Left cardiac atrium (tissue), 4 donors: ENCODE measurements at regions of chr2 and their contacts with region 1.

Region 1: GRCh38 chr2:45935791-45936622 is 284.5 kb downstream of the PRKCE start:
- DNase-seq: peak; percentile 97
- ATAC-seq: peak; percentile 81 to 91

Region 2: GRCh38 chr2:45643543-45644542 is 292.2 kb before region 1 on chr2:
- intact Hi-C with region 1: loop called (anchors 2 kb)
- DNase-seq: peak; percentile 70
- ATAC-seq: peak; percentile 97 to 98

Region 3: DNA sequence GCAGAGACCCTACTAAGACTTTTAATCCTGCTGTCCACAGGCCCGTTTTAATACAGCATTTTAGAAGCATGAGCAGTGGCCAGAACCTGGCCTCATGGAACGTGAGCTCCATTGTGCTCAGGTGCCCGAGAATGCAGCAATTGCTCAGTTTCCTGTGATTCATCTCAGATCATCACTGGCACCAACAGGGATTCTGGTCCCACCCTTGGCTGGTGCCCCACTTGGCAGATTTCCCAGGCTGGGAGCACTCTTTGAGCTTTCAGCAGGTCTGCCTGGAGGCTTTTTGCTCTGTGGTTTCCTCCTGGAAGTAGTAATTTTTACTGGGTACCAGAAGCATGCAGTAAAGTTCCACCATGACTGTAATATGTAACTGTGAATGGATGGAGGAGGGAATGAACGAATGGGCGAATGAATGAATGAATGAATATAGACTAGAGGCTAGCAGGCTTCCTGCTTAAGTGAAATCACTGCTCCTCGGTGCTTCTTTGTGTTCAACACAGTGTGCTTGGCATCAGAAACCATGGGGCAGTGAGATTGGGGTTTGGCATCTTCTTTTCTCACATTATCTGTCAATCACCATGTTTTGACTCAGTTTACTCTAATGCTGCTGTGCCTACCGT is 28.3 kb after region 1 on chr2:
- intact Hi-C with region 1: no loop called
- DNase-seq: peak; percentile 83
- ATAC-seq: peak; percentile 50 to 82